ENCODE measurements at regions of chr6 and their contacts with region 1.

Region 1: GRCh38 chr6:15515226-15516017 is 147.4 kb downstream of the DTNBP1 start:
- DNase-seq: no peak
- ATAC-seq: no peak
- H3K4me3 ChIP-seq: no peak overlapping the region
- H3K27ac ChIP-seq: no peak overlapping the region
- H3K4me1 ChIP-seq: no peaks in the 10 kb centered on the region
- H3K27me3 ChIP-seq: no peaks in the 10 kb centered on the region
- CTCF ChIP-seq: no peak

Region 2: DNA sequence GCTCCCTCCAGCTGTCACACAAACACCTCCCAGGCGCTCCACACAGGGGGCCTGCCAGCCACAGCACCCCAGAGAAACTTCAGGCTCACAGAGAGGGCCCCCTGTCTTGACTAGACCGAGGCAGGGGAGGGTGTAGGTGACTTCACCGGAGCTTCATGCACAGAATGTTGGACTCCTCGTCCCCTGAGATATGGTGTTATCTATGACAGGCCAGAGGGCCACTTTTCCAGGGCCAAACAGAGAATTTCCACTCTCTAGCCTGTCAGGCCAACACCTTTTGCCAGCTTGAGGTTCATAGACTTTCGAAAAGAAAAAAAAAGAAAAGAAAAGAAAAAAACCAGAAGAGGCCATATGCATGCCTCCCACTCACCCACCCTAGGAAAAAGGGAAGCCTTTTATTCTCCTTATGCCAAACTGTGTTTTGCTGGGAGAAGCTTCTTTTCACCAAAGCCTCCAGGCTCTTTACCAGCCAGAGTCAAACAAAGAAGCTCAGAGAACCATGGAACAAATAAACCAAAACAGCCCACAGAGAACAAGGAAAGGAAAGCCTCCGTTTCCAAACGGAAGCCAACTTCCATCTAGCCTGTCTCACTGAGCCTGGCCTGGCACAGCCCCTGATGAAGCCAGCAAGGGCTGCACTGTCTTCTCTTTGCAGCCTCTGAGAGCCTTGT is 582.8 kb before region 1 on chr6:
- CTCF ChIA-PET with region 1: no interaction called
- POLR2A ChIA-PET with region 1: no interaction called
- intact Hi-C with region 1: no loop called
- DNase-seq: no peak
- ATAC-seq: no peak
- H3K4me3 ChIP-seq: no peak overlapping the region
- H3K27ac ChIP-seq: no peak overlapping the region
- H3K4me1 ChIP-seq: peaks cover 17% of the 10 kb centered on the region
- H3K27me3 ChIP-seq: no peaks in the 10 kb centered on the region
- CTCF ChIP-seq: no peak

Region 3: GRCh38 chr6:15101130-15101529 is 414.3 kb before region 1 on chr6:
- CTCF ChIA-PET with region 1: interaction called, 14 read pairs
- POLR2A ChIA-PET with region 1: no interaction called
- intact Hi-C with region 1: no loop called
- DNase-seq: no peak
- ATAC-seq: no peak
- H3K4me3 ChIP-seq: no peak overlapping the region
- H3K27ac ChIP-seq: no peak overlapping the region
- H3K4me1 ChIP-seq: no peaks in the 10 kb centered on the region
- H3K27me3 ChIP-seq: no peaks in the 10 kb centered on the region
- CTCF ChIP-seq: no peak

Measured in PC-3 (cell line).